MCF 10A (cell line): ENCODE measurements at regions of chr7 and their contacts with region 1.

Region 1: GRCh38 chr7:148458263-148458662 is 132.3 kb upstream of the C7orf33 start:
- DNase-seq: no peak
- H3K4me3 Mint-ChIP-seq: no peak overlapping the region
- H3K27ac Mint-ChIP-seq: no peak overlapping the region
- H3K4me1 Mint-ChIP-seq: no peaks in the 10 kb centered on the region
- H3K27me3 Mint-ChIP-seq: no peaks in the 10 kb centered on the region
- CTCF ChIP-seq: no peak

Region 2: GRCh38 chr7:148286150-148286549 is 172.1 kb before region 1 on chr7:
- CTCF ChIA-PET with region 1: interaction called, 11 read pairs
- POLR2A ChIA-PET with region 1: no interaction called
- intact Hi-C with region 1: loop called (anchors 1 kb)
- DNase-seq: peak; percentile 44
- H3K4me3 Mint-ChIP-seq: no peak overlapping the region
- H3K27ac Mint-ChIP-seq: no peak overlapping the region
- H3K4me1 Mint-ChIP-seq: no peaks in the 10 kb centered on the region
- H3K27me3 Mint-ChIP-seq: peaks cover 22% of the 10 kb centered on the region
- CTCF ChIP-seq: peak; percentile 47